Cardiac septum (tissue), 1 donor: ENCODE measurements at regions of chr3 and their contacts with region 1.

Region 1: DNA sequence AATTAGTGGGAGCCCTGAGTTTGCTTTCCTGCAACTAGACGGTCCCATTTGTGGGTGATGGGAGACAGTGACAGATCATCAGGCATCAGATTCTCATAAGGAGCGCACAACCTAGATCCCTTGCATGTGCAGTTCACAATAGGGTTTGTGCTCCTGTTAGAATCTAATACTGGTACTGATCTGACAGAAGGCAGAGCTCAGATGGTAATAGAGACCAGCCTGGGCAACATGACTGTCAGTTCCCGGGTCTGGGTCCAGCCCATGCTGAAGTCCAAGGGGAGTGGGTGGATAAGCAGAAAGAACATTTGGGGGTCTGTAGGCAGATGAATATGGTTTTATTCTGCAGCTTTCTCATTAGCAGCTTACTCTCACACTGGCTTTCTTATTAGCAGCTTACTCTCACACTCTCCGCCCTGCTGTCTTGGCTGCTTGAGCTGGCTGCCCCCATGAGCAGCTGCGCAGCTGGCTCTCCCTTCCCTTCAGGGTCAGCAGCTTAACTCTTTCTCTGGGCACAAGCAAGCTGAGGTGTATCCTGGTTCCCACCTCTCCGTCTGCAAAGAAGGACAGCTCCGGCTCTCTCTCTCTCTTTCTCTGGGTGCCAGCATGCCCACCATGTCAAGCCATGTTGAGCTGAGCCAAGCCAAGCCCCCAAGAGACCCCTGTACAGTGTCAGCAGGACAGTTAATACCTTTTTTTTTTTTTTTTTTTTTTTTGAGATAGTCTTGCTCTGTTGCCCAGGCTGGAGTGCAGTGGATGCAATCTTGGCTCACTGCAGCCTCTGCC is 46.5 kb downstream of the KLHDC8B start:
- DNase-seq: no peak

Region 2: GRCh38 chr3:49093853-49094767 is 123.8 kb before region 1 on chr3 and contains the start of gene QRICH1:
- intact Hi-C with region 1: no loop called
- DNase-seq: peak; percentile 98
- total RNA-seq, gene QRICH1: 54.5 TPM

Region 3: GRCh38 chr3:49238274-49239127 is 20.6 kb after region 1 on chr3:
- intact Hi-C with region 1: no loop called
- DNase-seq: no peak

Region 4: GRCh38 chr3:49276475-49277382 is 58.9 kb after region 1 on chr3 and contains the start of gene C3orf62:
- intact Hi-C with region 1: loop called (anchors 5 kb)
- DNase-seq: peak; percentile 96
- total RNA-seq, gene C3orf62: 2.9 TPM